OCI-LY7 (cell line): ENCODE measurements at regions of chr12 and their contacts with region 1.

Region 1: DNA sequence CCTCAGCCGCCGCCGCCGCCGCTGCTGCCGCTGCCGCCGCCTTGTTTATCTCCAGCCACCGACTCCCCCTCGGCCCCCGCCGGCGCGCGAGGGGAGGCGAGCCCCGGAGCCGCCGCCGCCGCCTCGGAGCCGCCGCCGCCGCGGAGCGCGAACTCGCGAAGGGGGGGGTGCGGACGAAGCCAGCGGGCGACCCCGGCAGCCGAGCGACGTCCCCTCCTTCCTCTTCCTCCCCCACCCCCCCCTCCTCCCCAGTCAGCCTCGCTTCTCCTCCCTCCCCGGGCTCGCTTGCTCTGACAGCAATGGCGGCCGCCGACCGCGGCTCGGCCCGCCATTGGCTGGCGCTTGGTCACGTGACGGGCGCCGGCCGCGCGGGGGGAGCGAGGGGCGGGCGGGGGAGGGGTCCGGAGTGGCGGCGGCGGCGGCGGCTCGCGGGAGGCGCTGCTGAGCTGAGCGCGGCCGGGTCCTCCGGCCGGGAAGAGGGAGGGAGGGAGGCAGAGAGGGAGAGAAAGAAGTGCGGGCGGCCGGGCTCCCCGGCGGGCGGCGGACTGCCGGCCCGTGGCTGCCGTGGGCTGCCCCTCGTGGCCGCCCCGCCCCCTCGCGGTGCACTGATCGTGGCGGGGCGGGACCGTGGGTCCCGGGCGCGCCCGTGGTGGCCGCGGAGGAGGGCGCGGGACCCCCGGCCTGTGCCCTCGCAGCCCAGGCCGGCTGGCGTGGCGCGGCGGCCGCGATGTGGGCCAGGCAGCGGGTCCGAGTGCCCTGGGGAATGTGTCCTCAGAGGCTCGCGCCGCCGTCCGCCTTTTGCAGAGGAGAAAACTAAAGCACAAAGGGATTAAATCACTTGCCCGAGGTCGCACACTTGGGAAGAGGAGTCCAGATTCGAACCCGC is at the start of gene MED13L:
- DNase-seq: peak; percentile 93
- H3K4me3 ChIP-seq: peak within 1 kb of the TSS; percentile 77
- H3K27ac ChIP-seq: no peak within 1 kb of the TSS
- H3K4me1 ChIP-seq: peaks cover 15% of the 10 kb centered on the region
- CTCF ChIP-seq: no peak; the same call in 1 of the 2 replicates
- total RNA-seq, gene MED13L: 20.1 and 25.7 TPM in 2 replicates

Region 2: GRCh38 chr12:116318576-116319232 is 41.1 kb after region 1 on chr12:
- CTCF ChIA-PET with region 1: no interaction called
- POLR2A ChIA-PET with region 1: interaction called, 10 read pairs
- intact Hi-C with region 1: no loop called
- DNase-seq: no peak
- H3K4me3 ChIP-seq: no peak overlapping the region
- H3K27ac ChIP-seq: no peak overlapping the region
- H3K4me1 ChIP-seq: no peaks in the 10 kb centered on the region
- CTCF ChIP-seq: no peak

Region 3: GRCh38 chr12:116849216-116849615 is 571.6 kb after region 1 on chr12:
- CTCF ChIA-PET with region 1: no interaction called
- POLR2A ChIA-PET with region 1: no interaction called
- intact Hi-C with region 1: no loop called
- DNase-seq: no peak
- H3K4me3 ChIP-seq: no peak overlapping the region
- H3K27ac ChIP-seq: no peak overlapping the region
- H3K4me1 ChIP-seq: peaks cover 9% of the 10 kb centered on the region
- CTCF ChIP-seq: no peak